Activated T-helper 2 cell treated with anti-CD3 and anti-CD28 coated beads, Interferon-gamma antibody, Interleukin-2, Interleukin-4, amounts not matched to agents 10 μg/mL and 5 μg/mL and 100 μg/mL, durations not matched to agents 14 hours and 24 hours and 36 hours (primary cell): ENCODE measurements at regions of chr17 and their contacts with region 1.

Region 1: DNA sequence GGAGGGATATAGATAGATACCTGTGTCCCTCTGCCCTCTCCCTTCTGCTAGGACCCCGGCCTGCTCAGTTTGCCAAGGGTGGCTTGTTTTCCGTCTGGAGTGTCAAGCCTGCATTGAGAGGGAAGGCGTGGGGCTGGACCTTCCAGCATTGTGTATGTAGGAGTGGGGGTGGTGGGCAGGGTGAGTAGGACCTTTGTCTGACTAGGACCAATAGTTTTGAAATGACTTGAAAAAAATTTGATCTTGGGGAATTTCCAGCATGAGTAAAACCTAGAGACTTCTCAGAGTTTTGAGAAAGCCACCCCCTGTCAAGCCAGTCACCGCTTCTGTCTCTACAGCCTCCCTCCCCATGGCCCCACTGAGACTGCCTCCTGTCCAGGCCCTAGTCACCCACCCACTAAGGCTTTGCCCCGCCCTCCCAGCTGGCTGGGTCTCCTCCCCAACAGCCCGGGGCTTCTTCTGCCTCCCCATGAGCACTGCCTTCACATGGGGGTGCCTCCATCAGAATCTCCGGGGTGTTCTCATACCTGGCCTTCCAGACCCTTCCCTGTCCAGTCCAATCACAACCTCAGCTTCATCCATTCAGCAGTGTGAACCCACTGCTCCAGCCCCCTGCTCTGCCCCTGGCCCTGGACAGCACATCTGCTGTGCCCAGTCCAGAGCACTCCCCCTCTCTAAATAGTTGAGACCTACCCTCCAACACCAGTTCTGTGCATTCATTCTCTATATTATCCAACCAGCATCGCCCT is 207.0 kb downstream of the MSI2 start:
- DNase-seq: peak; percentile 67
- H3K4me3 Mint-ChIP-seq: peak overlapping the region; percentile 53
- H3K27ac Mint-ChIP-seq: peak overlapping the region; percentile 90
- H3K4me1 Mint-ChIP-seq: peaks cover 64% of the 10 kb centered on the region
- H3K27me3 Mint-ChIP-seq: no peaks in the 10 kb centered on the region

Region 2: DNA sequence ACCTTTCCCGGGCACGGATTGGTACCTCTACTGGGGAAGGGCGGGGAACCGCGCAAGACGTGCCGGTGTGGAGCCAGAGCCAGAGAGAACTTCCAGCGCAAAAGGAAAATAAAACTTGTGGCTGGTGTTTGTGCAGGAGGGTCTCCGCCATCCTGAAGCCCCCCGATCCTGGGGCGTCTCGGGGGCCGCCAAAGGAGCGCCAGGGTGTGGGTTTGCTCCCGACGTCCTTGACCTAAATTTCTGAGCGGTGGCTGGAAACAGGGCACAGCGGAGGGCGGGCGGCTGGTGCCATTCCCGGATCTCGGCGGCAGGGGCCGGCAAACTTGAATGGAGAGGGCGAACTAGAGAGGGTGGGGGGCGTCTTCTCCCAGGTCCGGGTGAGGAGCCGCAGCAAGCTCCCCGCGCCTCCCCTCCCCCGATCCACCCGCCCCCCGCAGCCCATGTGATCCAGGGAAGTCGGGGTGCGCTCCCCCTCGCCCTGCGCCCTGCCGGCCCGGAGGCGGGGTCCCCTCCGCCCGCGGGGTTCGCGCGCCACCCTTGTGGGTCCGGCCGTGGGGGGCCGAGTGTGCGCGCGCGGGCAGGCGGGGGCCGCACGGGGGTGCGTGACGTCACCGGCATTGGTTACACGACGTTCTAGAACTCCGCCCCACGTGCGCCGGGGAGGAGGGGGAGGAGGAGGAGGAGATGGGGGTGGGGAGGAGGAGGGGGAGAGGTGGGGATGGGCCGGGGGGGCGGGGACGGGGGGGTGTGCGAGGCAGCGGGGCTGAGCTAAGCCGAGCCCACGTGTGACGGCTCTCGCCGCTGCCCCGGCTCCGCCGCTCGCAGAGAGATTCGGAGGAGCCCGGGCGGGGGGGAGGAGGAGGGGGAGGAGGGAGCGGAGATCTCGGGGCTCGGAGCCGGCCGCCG is 207.2 kb before region 1 on chr17 and contains the start of gene MSI2:
- intact Hi-C with region 1: loop called (anchors 2 kb)
- DNase-seq: peak; percentile 82
- H3K4me3 Mint-ChIP-seq: peak within 1 kb of the TSS; percentile 97
- H3K27ac Mint-ChIP-seq: peak within 1 kb of the TSS; percentile 88
- H3K4me1 Mint-ChIP-seq: peaks cover 41% of the 10 kb centered on the region
- H3K27me3 Mint-ChIP-seq: peaks cover 2% of the 10 kb centered on the region
- total RNA-seq, gene MSI2: 181 and 198 TPM in 2 replicates

Region 3: GRCh38 chr17:57284984-57285646 is 178.2 kb before region 1 on chr17:
- intact Hi-C with region 1: loop called (anchors 1 kb)
- DNase-seq: peak; percentile 58
- H3K4me3 Mint-ChIP-seq: peak overlapping the region; percentile 68
- H3K27ac Mint-ChIP-seq: peak overlapping the region; percentile 88
- H3K4me1 Mint-ChIP-seq: peaks cover 76% of the 10 kb centered on the region
- H3K27me3 Mint-ChIP-seq: no peaks in the 10 kb centered on the region

Region 4: DNA sequence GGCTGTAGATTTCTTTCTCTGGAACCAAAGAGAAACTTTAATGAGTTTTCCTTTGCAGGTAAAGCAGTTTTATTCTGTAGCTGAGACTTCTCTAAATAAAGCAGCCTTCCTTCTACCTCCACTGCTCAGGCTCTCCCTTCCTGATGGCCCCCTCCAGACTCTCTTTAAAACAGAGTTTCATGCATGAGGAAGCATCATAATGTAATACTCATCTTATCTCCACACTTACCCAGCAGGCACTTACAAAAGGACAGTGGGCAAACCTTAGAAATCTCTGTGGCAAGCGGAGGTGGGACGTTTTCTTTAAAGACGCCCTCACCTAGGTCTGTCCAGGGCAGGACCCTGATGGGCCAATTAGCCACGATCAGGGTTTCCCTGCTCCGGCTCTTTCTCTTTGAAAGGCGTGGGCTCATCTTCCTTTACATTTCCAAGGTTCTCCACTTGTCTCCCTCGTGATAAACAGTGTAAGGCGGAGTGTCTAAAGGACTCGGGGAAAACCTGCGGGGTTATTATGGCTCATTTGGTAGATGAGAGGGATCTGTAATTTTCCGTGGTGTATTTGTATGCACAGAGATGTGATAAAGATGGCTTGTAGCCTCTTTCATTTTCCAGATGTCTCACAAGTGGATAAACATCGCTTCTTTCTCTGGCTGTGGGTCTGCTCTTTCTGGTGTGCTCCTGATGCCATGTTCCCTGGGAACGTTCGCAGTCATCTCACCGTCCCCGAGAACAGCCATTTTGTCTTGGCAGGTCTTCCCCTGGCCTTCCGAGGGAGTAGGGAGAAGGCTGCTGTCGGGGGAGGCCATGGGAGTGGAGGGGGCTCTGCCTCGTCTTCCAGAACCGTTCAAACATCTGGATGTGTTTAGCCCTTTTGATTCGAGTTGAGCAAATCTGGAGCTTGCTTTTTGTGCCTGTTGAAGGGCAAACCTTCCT is 42.8 kb after region 1 on chr17:
- intact Hi-C with region 1: loop called (anchors 5 kb)
- DNase-seq: no peak
- H3K4me3 Mint-ChIP-seq: no peak overlapping the region
- H3K27ac Mint-ChIP-seq: no peak overlapping the region
- H3K4me1 Mint-ChIP-seq: peaks cover 22% of the 10 kb centered on the region
- H3K27me3 Mint-ChIP-seq: no peaks in the 10 kb centered on the region

Region 5: DNA sequence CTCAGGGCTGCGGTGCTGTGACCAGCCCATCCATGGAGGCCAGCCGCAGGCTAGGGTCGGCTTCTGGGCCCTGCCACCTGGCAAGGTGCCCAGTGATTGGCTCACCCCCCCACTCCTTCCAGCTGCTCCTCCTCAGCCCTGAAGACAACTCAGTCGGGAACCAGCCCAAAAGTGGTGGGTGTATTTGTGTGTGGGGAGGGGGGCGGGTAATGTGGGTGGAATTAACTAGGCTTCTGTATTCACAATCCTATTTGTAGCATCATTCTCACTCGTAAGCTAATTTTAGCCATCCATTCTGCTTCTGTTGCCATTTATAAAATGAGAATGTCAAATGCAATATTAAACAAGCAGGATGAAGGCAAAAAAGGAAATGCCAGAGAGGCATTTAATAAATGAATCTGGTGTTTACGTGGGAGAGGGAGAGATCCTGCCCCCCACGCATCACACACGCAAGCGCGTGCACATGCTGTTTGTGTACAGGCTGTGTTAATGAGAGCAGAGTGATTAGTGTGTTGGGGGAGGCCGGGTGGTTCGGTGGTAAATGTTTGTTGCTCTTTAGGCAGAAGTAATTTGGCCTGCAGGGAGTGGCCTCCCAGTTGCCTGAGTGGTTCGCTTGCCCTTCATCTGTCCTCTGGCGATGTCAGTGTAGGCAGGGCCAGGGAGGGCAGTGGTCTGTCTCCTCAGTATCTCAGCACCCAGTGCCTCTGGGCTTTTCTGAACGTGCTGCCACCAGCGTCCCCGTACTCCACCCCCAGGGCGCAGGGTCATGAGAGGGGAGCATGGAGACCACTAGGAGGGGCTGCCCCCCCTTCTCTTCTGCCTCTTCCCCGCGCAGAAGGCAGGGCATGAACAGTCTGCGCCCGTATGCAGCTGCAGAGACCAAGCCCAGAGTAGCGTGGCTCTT is 141.7 kb after region 1 on chr17:
- intact Hi-C with region 1: loop called (anchors 2 kb)
- DNase-seq: no peak
- H3K4me3 Mint-ChIP-seq: no peak overlapping the region
- H3K27ac Mint-ChIP-seq: peak overlapping the region; percentile 88
- H3K4me1 Mint-ChIP-seq: peaks cover 54% of the 10 kb centered on the region
- H3K27me3 Mint-ChIP-seq: no peaks in the 10 kb centered on the region